A673 (cell line): ENCODE measurements at regions of chr1 and their contacts with region 1.

Region 1: GRCh38 chr1:52127181-52128180 is 14.4 kb upstream of the ZFYVE9 start:
- DNase-seq: peak; percentile 84
- H3K4me3 ChIP-seq: no peak overlapping the region
- H3K27ac ChIP-seq: no peak overlapping the region
- H3K4me1 ChIP-seq: no peaks in the 10 kb centered on the region
- H3K27me3 ChIP-seq: peaks cover 5% of the 10 kb centered on the region
- CTCF ChIP-seq: peak; percentile 84

Region 2: DNA sequence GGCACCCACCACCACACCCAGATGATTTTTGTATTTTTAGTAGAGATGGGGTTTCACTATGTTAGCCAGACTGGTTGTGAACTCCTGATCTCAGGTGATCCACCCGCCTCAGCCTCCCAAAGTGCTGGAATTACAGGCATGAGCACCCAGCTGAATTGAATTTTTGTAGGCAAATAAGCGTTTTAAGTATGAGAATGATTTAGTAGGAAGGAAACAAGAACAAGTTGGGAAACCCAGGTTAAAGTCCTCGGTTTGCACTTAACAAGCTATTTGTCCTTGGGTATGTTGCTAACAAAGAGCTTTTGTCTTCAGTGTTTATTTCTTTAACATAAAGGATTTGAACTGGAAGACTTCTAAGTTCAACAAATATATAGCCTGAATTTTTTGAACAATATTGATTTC is 47.5 kb before region 1 on chr1:
- CTCF ChIA-PET with region 1: no interaction called
- POLR2A ChIA-PET with region 1: interaction called, 11 read pairs
- intact Hi-C with region 1: no loop called
- DNase-seq: no peak
- H3K4me3 ChIP-seq: no peak overlapping the region
- H3K27ac ChIP-seq: no peak overlapping the region
- H3K4me1 ChIP-seq: no peaks in the 10 kb centered on the region
- H3K27me3 ChIP-seq: no peaks in the 10 kb centered on the region
- CTCF ChIP-seq: no peak

Region 3: GRCh38 chr1:52348704-52349300 is 221.3 kb after region 1 on chr1:
- CTCF ChIA-PET with region 1: no interaction called
- POLR2A ChIA-PET with region 1: no interaction called
- intact Hi-C with region 1: loop called (anchors 5 kb)
- DNase-seq: peak; percentile 46
- H3K4me3 ChIP-seq: no peak overlapping the region
- H3K27ac ChIP-seq: no peak overlapping the region
- H3K4me1 ChIP-seq: no peaks in the 10 kb centered on the region
- H3K27me3 ChIP-seq: no peaks in the 10 kb centered on the region
- CTCF ChIP-seq: peak; percentile 47